AG04449 (cell line): ENCODE measurements at regions of chr15 and their contacts with region 1.

Region 1: GRCh38 chr15:44215594-44215993 is 20.5 kb upstream of the FRMD5 start:
- DNase-seq: peak; percentile 75
- H3K4me3 ChIP-seq: no peak overlapping the region
- CTCF ChIP-seq: no peak

Region 2: DNA sequence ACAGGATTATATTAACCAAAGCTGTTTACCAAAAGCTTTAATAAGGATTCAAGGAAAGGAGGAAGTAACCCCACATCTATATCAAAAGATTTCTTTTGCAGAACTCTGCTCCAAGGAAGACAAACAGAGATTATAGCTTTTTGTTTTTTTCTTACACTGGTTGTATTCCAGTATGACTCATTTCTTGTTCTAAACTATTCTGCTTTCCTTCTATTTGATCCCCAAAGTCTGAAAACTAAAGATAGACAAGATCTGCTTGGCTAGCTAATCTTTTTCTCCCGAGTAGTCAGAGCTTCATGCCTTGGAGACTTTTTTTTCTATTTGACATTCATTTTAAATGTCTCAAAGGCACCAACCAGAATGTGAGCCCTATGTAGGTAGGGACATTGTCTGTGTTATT is 16.2 kb after region 1 on chr15:
- CTCF ChIA-PET with region 1: interaction called, 13 read pairs
- POLR2A ChIA-PET with region 1: no interaction called
- DNase-seq: no peak
- H3K4me3 ChIP-seq: no peak overlapping the region
- CTCF ChIP-seq: no peak